BJ (cell line): ENCODE measurements at regions of chr21 and their contacts with region 1.

Region 1: DNA sequence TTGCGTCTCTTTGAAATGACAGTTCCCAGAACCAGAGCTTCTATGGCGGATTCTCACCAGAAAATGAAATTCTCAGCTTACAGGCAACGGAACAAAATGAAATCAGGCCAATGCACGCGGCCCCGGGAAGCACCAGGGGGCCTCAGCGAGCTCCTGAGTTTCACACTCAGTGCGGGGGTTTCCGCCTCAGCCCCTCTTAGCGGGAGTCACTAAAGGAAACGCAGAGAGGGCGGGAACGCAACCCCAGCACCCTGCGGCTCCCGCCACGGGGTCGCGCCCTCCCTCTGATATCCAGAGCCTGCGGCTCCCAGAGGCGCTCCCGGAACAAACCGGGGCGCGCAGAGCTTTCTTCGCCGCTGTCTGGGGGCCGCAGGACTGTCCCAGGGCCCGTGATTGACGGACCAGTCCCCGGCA is 7.9 kb upstream of the COL6A1 start:
- DNase-seq: no peak
- H3K4me3 ChIP-seq: peak overlapping the region; percentile 38
- H3K27me3 ChIP-seq: no peaks in the 10 kb centered on the region
- CTCF ChIP-seq: peak; percentile 86

Region 2: DNA sequence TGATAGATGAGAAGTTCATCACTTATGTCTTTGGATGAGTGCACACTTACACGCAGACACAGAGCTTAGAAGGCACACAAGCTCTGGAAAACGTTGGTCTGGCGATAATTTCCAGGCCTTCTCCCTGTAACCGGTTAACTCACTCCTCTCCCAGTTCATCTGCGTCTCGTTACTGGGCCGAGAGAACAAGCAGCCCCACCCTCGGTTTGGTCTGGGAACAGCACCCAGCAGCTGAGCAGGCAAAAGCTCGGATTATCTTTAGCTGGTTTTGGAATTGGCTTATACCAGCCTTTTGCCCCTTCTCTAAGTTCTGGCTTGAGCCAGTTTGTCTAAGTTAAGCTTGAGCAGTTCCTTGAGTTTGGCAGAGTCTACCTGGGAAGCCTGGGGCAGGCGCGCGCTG is 19.4 kb before region 1 on chr21:
- CTCF ChIA-PET with region 1: interaction called, 13 read pairs
- POLR2A ChIA-PET with region 1: no interaction called
- DNase-seq: no peak
- H3K4me3 ChIP-seq: no peak overlapping the region
- H3K27me3 ChIP-seq: peaks cover 5% of the 10 kb centered on the region
- CTCF ChIP-seq: peak; percentile 56

Region 3: DNA sequence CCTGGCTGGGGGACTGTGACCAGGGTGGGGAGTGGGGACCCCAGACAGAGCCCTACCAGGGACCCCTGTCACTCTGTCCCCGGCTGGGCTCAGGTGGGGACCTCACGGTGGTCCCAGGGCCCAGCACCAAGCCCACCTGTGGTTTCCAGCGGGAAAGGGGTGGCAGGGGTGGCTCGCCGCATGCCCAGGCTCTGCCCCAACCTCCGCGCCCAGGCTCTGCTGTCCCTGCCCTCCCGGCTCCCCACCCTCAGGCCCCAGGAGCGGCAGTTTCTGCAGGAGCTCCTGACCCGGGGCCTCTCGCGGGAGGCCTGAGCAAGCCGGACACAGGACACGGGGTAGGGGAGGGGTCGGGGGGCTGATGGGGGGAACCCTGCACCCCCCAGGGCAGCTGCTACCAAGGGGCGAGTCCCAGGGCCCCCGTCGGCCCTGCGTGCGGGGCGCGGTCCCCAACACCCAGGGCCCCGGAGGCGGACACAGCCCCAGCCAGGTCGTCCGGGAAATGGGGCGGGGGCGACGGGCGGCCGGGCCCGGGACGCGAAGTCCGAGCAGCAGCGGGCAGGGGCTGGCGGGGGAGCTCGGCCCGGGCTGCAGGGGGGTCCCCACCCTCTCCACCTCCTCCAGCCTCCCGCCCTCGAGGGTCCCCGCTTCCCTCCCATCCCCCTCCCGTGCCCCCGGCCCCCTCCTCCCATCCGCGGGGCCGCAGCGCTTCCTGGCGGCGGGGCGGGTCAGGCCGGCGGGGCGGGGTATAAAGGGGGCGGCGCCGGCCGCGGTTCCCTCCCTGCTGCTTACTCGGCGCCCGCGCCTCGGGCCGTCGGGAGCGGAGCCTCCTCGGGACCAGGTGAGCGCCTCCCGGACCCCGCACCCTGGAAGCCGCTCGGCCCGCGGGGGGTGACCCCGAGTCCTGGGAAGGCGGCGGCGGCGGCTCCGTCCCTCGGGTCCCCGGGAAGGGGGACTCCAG is 123.9 kb after region 1 on chr21 and contains the start of gene COL6A2:
- CTCF ChIA-PET with region 1: interaction called, 21 read pairs
- POLR2A ChIA-PET with region 1: interaction called, 3 read pairs
- DNase-seq: no peak
- H3K4me3 ChIP-seq: peak within 1 kb of the TSS; percentile 88
- H3K27me3 ChIP-seq: no peaks in the 10 kb centered on the region
- CTCF ChIP-seq: no peak
- polyA plus RNA-seq, gene COL6A2: 412 and 665 TPM in 2 replicates

Region 4: GRCh38 chr21:46116776-46117585 is 143.3 kb after region 1 on chr21:
- CTCF ChIA-PET with region 1: interaction called, 12 read pairs
- POLR2A ChIA-PET with region 1: no interaction called
- DNase-seq: no peak
- H3K4me3 ChIP-seq: no peak overlapping the region
- H3K27me3 ChIP-seq: no peaks in the 10 kb centered on the region
- CTCF ChIP-seq: no peak

Region 5: GRCh38 chr21:46144464-46145070 is 170.9 kb after region 1 on chr21:
- CTCF ChIA-PET with region 1: interaction called, 64 read pairs
- POLR2A ChIA-PET with region 1: no interaction called
- DNase-seq: no peak
- H3K4me3 ChIP-seq: no peak overlapping the region
- H3K27me3 ChIP-seq: peaks cover 2% of the 10 kb centered on the region; the same call in 1 of the 2 replicates
- CTCF ChIP-seq: no peak